GM13977 (cell line): ENCODE measurements at regions of chr19 and their contacts with region 1.

Region 1: GRCh38 chr19:18251587-18252369 is 22.5 kb downstream of the IQCN start:
- DNase-seq: peak; percentile 94
- CTCF ChIP-seq: peak; percentile 84

Region 2: GRCh38 chr19:18203863-18204393 is 47.9 kb before region 1 on chr19 and contains the start of gene RAB3A:
- in situ Hi-C with region 1: loop called (anchors 10 kb)
- DNase-seq: peak; percentile 99
- CTCF ChIP-seq: no peak